ENCODE measurements at regions of chr5 and their contacts with region 1.

Region 1: GRCh38 chr5:149618581-149619251 is 37.4 kb downstream of the ARHGEF37 start:
- DNase-seq: peak; percentile 66
- H3K4me3 Mint-ChIP-seq: no peak overlapping the region
- H3K27ac Mint-ChIP-seq: no peak overlapping the region
- H3K4me1 Mint-ChIP-seq: peaks cover 10% of the 10 kb centered on the region
- H3K27me3 Mint-ChIP-seq: no peaks in the 10 kb centered on the region

Region 2: GRCh38 chr5:149381987-149382340 is 236.8 kb before region 1 on chr5:
- CTCF ChIA-PET with region 1: interaction called, 9 read pairs
- intact Hi-C with region 1: loop called (anchors 1 kb)
- DNase-seq: peak; percentile 87
- H3K4me3 Mint-ChIP-seq: no peak overlapping the region
- H3K27ac Mint-ChIP-seq: no peak overlapping the region
- H3K4me1 Mint-ChIP-seq: no peaks in the 10 kb centered on the region
- H3K27me3 Mint-ChIP-seq: no peaks in the 10 kb centered on the region

Region 3: GRCh38 chr5:149448831-149449714 is 169.6 kb before region 1 on chr5:
- CTCF ChIA-PET with region 1: interaction called, 14 read pairs
- intact Hi-C with region 1: loop called (anchors 1 kb)
- DNase-seq: peak; percentile 57
- H3K4me3 Mint-ChIP-seq: no peak overlapping the region
- H3K27ac Mint-ChIP-seq: no peak overlapping the region
- H3K4me1 Mint-ChIP-seq: no peaks in the 10 kb centered on the region
- H3K27me3 Mint-ChIP-seq: no peaks in the 10 kb centered on the region

Region 4: DNA sequence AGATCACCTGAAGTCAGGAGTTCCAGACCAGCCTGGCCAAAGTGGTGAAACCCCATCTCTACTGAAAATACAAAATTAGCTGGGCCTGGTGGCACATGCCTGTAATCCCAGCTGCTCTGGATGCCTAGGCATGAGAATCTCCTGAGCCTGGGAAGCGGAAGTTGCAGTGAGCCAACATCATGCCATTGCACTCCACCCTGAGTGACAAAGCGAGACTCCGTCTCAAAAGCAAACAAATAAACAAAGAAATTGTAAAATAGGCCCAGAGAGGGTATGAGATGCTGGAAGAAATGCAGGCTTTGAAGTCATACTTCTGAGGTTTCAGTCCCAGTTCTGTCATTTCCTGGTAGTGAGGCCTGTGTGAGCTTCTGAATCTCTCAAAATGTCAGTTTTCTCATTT is 42.7 kb before region 1 on chr5:
- CTCF ChIA-PET with region 1: interaction called, 6 read pairs
- intact Hi-C with region 1: loop called (anchors 2 kb)
- DNase-seq: peak; percentile 66
- H3K4me3 Mint-ChIP-seq: no peak overlapping the region
- H3K27ac Mint-ChIP-seq: peak overlapping the region; percentile 89
- H3K4me1 Mint-ChIP-seq: peaks cover 34% of the 10 kb centered on the region
- H3K27me3 Mint-ChIP-seq: no peaks in the 10 kb centered on the region

Measured in activated naive CD4-positive, alpha-beta T cell treated with anti-CD3 and anti-CD28 coated beads for 36 hours (primary cell).